Naive thymus-derived CD4-positive, alpha-beta T cell (primary cell): ENCODE measurements at regions of chr11 and their contacts with region 1.

Region 1: DNA sequence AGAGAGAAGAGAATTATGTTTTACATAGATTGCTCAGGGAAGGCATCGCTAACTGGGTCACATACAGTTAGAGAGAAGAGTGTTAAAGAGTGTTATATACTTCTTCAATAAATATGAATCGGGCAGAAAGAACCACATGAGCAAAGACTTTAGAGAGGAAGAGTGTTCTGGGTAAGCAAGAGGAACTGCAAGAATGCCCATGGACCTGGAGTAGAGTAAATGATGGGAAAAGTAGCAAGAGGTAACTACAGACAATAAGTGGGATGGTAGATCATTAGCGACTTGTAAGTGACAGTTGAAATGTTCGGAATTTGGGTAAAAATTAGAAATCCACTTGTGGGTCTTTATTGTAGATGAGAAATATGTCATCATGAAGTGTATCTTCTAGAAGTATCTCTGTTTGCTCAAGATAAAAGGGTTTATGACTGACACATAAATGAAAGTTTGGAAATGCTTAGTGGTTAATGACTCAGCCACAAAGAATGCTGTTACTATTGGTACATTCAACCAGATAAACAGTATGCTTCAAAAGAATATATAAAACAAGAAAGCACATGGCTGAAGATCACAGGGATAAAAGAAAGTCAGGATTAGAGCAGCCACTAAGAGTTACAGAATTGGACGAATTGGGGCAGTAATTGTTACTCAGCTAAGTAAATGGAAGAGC is 229.3 kb downstream of the CASP12 start:
- DNase-seq: no peak
- ATAC-seq: peak; percentile 79
- H3K4me3 ChIP-seq: no peak overlapping the region
- H3K4me3 Mint-ChIP-seq: peak overlapping the region in 1 of 10 donors; percentile 10
- H3K27ac ChIP-seq: no peak overlapping the region
- H3K27ac Mint-ChIP-seq: peak overlapping the region in 3 of 9 donors; percentile 4 to 20 (median 10)
- H3K4me1 ChIP-seq: no peaks in the 10 kb centered on the region
- H3K4me1 Mint-ChIP-seq: peaks cover 0 to 20% (median 8%) of the 10 kb centered on the region in 7 donors
- H3K27me3 ChIP-seq: no peaks in the 10 kb centered on the region
- H3K27me3 Mint-ChIP-seq: peaks cover 0 to 14% (median 0%) of the 10 kb centered on the region in 5 donors

Region 2: DNA sequence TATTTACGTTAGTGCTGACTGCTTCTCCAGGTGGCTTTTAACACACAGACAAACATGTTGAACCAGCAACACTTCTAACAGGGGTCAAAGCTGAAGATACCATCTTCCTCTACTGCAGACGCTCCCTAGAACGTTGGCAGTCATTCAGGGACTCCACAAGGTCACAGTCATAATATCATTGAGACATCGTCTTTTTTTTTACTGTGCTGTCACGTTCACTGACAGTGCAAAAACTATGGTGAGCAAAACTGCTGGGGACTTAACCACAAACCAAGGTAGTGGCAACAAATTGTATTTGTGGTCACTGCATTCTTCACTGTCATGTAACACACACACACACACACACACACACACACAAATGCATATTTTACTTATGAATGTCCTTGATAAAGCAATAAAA is 15.5 kb before region 1 on chr11:
- CTCF ChIA-PET with region 1: no interaction called
- POLR2A ChIA-PET with region 1: interaction called, 5 read pairs
- intact Hi-C with region 1: loop called in 1 of 2 experiments (anchors 2 kb)
- DNase-seq: no peak
- ATAC-seq: peak; percentile 76
- H3K4me3 ChIP-seq: no peak overlapping the region
- H3K4me3 Mint-ChIP-seq: no peak overlapping the region
- H3K27ac ChIP-seq: no peak overlapping the region
- H3K27ac Mint-ChIP-seq: no peak overlapping the region
- H3K4me1 ChIP-seq: peaks cover 0 to 10% of the 10 kb centered on the region in 2 donors
- H3K4me1 Mint-ChIP-seq: peaks cover 0 to 43% (median 9%) of the 10 kb centered on the region in 7 donors
- H3K27me3 ChIP-seq: no peaks in the 10 kb centered on the region
- H3K27me3 Mint-ChIP-seq: no peaks in the 10 kb centered on the region

Region 3: DNA sequence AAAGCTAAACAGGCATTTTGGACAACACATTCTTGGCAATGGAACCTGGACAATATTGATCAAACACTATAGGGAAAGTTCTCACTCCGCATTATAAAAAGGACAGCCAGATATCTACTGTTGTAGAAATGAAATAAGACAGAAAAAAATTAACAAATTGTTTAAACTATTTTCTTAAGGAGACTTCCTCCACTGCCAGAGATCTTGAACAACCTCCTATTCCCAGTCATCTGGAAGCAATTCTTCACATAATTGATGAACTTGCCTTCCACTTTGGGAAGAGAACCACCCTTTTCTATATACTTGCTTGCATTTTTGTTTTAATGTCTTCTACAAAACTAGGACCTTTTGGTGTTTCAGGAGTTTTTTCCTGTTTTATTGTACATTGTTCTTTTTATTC is 13.3 kb after region 1 on chr11:
- CTCF ChIA-PET with region 1: no interaction called
- POLR2A ChIA-PET with region 1: no interaction called
- intact Hi-C with region 1: loop called (anchors 2 kb)
- DNase-seq: no peak
- ATAC-seq: no peak
- H3K4me3 ChIP-seq: no peak overlapping the region
- H3K4me3 Mint-ChIP-seq: no peak overlapping the region
- H3K27ac ChIP-seq: no peak overlapping the region
- H3K27ac Mint-ChIP-seq: no peak overlapping the region
- H3K4me1 ChIP-seq: no peaks in the 10 kb centered on the region
- H3K4me1 Mint-ChIP-seq: peaks cover 2 to 14% (median 6%) of the 10 kb centered on the region in 7 donors
- H3K27me3 ChIP-seq: no peaks in the 10 kb centered on the region
- H3K27me3 Mint-ChIP-seq: no peaks in the 10 kb centered on the region

Region 4: DNA sequence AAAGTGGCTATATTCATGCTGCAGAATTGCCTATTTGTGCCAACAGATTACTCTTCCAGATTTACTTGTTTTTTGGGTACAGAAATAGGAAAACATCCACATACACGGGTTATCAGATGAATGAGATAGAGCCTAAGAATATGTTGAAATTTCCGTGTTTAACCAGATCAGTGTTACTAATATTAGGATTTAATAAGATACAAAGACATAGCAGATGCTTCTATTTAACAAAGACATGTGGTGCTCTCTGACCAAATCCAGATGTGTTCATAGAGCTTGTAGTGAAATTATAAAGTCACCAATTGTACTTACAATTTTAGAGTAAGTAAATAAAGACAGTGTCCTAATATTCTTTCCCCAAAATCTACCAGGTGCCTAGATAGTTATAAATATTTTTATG is 21.3 kb after region 1 on chr11:
- CTCF ChIA-PET with region 1: no interaction called
- POLR2A ChIA-PET with region 1: no interaction called
- intact Hi-C with region 1: loop called in 1 of 2 experiments (anchors 2 kb)
- DNase-seq: no peak
- ATAC-seq: no peak
- H3K4me3 ChIP-seq: no peak overlapping the region
- H3K4me3 Mint-ChIP-seq: no peak overlapping the region
- H3K27ac ChIP-seq: no peak overlapping the region
- H3K27ac Mint-ChIP-seq: no peak overlapping the region
- H3K4me1 ChIP-seq: no peaks in the 10 kb centered on the region
- H3K4me1 Mint-ChIP-seq: peaks cover 7 to 14% (median 9%) of the 10 kb centered on the region in 7 donors
- H3K27me3 ChIP-seq: no peaks in the 10 kb centered on the region
- H3K27me3 Mint-ChIP-seq: no peaks in the 10 kb centered on the region

Region 5: GRCh38 chr11:104700609-104701008 is 31.7 kb after region 1 on chr11:
- CTCF ChIA-PET with region 1: no interaction called
- POLR2A ChIA-PET with region 1: no interaction called
- intact Hi-C with region 1: loop called (anchors 2 to 5 kb)
- DNase-seq: peak in 5 of 9 donors; percentile 9 to 46 (median 30)
- ATAC-seq: peak; percentile 73
- H3K4me3 ChIP-seq: no peak overlapping the region
- H3K4me3 Mint-ChIP-seq: peak overlapping the region in 7 of 10 donors; percentile 11 to 65 (median 35)
- H3K27ac ChIP-seq: no peak overlapping the region
- H3K27ac Mint-ChIP-seq: peak overlapping the region in 6 of 9 donors; percentile 17 to 70 (median 28)
- H3K4me1 ChIP-seq: peaks cover 23 to 24% of the 10 kb centered on the region in 2 donors
- H3K4me1 Mint-ChIP-seq: peaks cover 22 to 42% (median 35%) of the 10 kb centered on the region in 7 donors
- H3K27me3 ChIP-seq: no peaks in the 10 kb centered on the region
- H3K27me3 Mint-ChIP-seq: no peaks in the 10 kb centered on the region

Region 6: GRCh38 chr11:104736502-104736901 is 67.6 kb after region 1 on chr11:
- CTCF ChIA-PET with region 1: no interaction called
- POLR2A ChIA-PET with region 1: no interaction called
- intact Hi-C with region 1: loop called in 1 of 2 experiments (anchors 5 kb)
- DNase-seq: no peak
- ATAC-seq: peak; percentile 36
- H3K4me3 ChIP-seq: no peak overlapping the region
- H3K4me3 Mint-ChIP-seq: no peak overlapping the region
- H3K27ac ChIP-seq: no peak overlapping the region
- H3K27ac Mint-ChIP-seq: no peak overlapping the region
- H3K4me1 ChIP-seq: no peaks in the 10 kb centered on the region
- H3K4me1 Mint-ChIP-seq: peaks cover 5 to 22% (median 11%) of the 10 kb centered on the region in 7 donors
- H3K27me3 ChIP-seq: no peaks in the 10 kb centered on the region
- H3K27me3 Mint-ChIP-seq: no peaks in the 10 kb centered on the region